Vagina (tissue), 2 donors: ENCODE measurements at regions of chr2 and their contacts with region 1.

Region 1: DNA sequence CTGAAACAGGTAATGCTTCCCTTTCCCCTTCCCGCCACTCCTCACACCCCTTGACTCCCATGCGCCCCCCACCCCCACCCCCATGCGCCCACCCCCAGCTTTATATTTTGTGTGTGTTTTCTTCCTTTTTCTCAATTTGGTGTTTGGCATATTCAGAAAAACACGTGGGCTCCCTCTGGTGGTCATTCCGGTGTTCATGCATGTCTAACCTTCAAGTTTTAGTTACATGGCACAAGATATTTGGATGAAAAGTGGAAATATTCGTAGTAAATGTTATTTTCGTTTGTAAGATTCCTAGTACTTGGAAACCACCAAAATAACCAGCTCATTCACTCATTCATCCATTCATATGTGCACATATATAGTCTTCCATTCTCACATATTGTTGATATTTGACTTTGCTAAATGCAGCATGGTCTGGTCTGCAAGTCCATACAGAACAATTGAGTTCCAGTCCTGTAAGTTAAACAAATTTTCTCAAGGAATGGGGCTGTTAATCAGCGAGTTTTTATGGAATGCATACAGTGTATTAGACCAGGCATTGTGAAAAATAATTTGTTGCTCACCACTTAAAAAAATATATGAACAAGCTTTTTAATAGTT is 143.6 kb upstream of the MAP3K20 start:
- DNase-seq: no peak
- H3K4me3 ChIP-seq: peak overlapping the region; percentile 4 to 15
- H3K27ac ChIP-seq: peak overlapping the region; percentile 50
- H3K4me1 ChIP-seq: peaks cover 20% of the 10 kb centered on the region
- H3K27me3 ChIP-seq: no peaks in the 10 kb centered on the region
- CTCF ChIP-seq: peak; percentile 21 to 63 (median 42)
- POLR2A ChIP-seq: no peak

Region 2: GRCh38 chr2:171160119-171160955 is 1771.7 kb before region 1 on chr2 and contains the start of gene TLK1:
- intact Hi-C with region 1: no loop called
- DNase-seq: peak in 1 of 2 donors; percentile 89
- H3K4me3 ChIP-seq: peak within 1 kb of the TSS; percentile 82 to 85
- H3K27ac ChIP-seq: peak within 1 kb of the TSS; percentile 96
- H3K4me1 ChIP-seq: peaks cover 22% of the 10 kb centered on the region
- H3K27me3 ChIP-seq: no peaks in the 10 kb centered on the region
- CTCF ChIP-seq: no peak
- POLR2A ChIP-seq: peak in 1 of 2 donors; percentile 43
- total RNA-seq, gene TLK1: 35.8 TPM

Region 3: GRCh38 chr2:172456002-172456401 is 476.0 kb before region 1 on chr2:
- intact Hi-C with region 1: no loop called
- DNase-seq: peak in 1 of 2 donors; percentile 79
- H3K4me3 ChIP-seq: no peak overlapping the region
- H3K27ac ChIP-seq: no peak overlapping the region
- H3K4me1 ChIP-seq: peaks cover 18% of the 10 kb centered on the region
- H3K27me3 ChIP-seq: no peaks in the 10 kb centered on the region
- CTCF ChIP-seq: no peak
- POLR2A ChIP-seq: no peak

Region 4: GRCh38 chr2:172806493-172806892 is 125.5 kb before region 1 on chr2:
- intact Hi-C with region 1: loop called (anchors 5 kb)
- DNase-seq: no peak
- H3K4me3 ChIP-seq: no peak overlapping the region
- H3K27ac ChIP-seq: no peak overlapping the region
- H3K4me1 ChIP-seq: no peaks in the 10 kb centered on the region
- H3K27me3 ChIP-seq: no peaks in the 10 kb centered on the region
- CTCF ChIP-seq: peak; percentile 50 to 77 (median 63)
- POLR2A ChIP-seq: no peak

Region 5: DNA sequence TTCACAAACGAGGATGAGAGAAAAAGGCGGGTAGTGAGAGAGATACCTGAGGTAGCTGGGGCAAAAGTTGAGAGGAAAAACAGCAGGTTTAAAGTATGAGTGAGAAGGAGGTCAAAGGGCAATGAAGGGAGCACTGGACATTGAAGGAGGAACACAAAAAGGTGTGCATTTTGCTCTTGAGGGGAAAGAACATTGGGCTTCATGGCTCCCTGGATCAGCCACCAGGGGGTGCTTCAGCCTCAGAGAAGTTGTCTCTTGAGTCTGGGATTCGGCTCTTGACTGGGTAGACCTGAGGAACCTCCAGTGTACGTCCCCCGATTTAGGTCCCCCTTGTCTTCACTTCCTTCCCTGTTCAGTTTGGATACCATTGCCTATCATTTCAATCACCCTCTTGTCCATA is 67.8 kb before region 1 on chr2:
- intact Hi-C with region 1: loop called (anchors 10 kb)
- DNase-seq: no peak
- H3K4me3 ChIP-seq: no peak overlapping the region
- H3K27ac ChIP-seq: no peak overlapping the region
- H3K4me1 ChIP-seq: peaks cover 23% of the 10 kb centered on the region
- H3K27me3 ChIP-seq: no peaks in the 10 kb centered on the region
- CTCF ChIP-seq: peak; percentile 41 to 68 (median 48)
- POLR2A ChIP-seq: no peak

Region 6: GRCh38 chr2:173914055-173914934 is 982.3 kb after region 1 on chr2:
- intact Hi-C with region 1: no loop called
- DNase-seq: no peak
- H3K4me3 ChIP-seq: no peak overlapping the region
- H3K27ac ChIP-seq: no peak overlapping the region
- H3K4me1 ChIP-seq: peaks cover 26% of the 10 kb centered on the region
- H3K27me3 ChIP-seq: no peaks in the 10 kb centered on the region
- CTCF ChIP-seq: no peak
- POLR2A ChIP-seq: no peak